IMR-90 (cell line): ENCODE measurements at regions of chr1 and their contacts with region 1.

Region 1: GRCh38 chr1:21005466-21006239 is 171.0 kb downstream of the EIF4G3 start:
- DNase-seq: no peak
- ATAC-seq: no peak
- H3K4me3 ChIP-seq: no peak overlapping the region
- H3K27ac ChIP-seq: no peak overlapping the region
- H3K4me1 ChIP-seq: no peaks in the 10 kb centered on the region
- H3K27me3 ChIP-seq: no peaks in the 10 kb centered on the region
- CTCF ChIP-seq: no peak
- POLR2A ChIP-seq: no peak
- RAD21 ChIP-seq: no peak

Region 2: DNA sequence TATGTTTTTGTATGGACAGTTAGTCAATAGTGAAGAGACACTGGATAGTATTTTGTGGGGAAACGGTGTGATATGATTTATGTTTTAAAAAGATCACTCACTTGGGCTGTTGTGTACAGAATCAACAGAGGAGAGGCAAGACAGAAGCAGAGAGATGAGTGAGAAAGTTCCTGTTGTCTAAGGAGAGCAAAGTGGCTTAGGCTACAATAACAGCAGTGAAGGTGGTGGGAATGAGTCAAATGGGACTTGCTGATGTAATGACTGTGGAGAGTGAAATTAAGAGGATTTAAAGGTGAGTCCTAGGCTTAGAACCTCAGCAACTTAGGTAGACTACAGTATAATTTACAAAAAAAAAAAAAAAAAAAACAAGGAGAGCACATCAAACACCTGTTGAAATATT is 49.4 kb before region 1 on chr1:
- CTCF ChIA-PET with region 1: no interaction called
- POLR2A ChIA-PET with region 1: no interaction called
- dilution Hi-C with region 1: no loop called
- in situ Hi-C with region 1: no loop called
- intact Hi-C with region 1: loop called (anchors 5 kb)
- DNase-seq: no peak
- ATAC-seq: no peak
- H3K4me3 ChIP-seq: no peak overlapping the region
- H3K27ac ChIP-seq: no peak overlapping the region
- H3K4me1 ChIP-seq: no peaks in the 10 kb centered on the region
- H3K27me3 ChIP-seq: no peaks in the 10 kb centered on the region
- CTCF ChIP-seq: no peak
- POLR2A ChIP-seq: no peak
- RAD21 ChIP-seq: no peak